ENCODE measurements at regions of chr4 and their contacts with region 1.

Region 1: GRCh38 chr4:16026160-16026761 is 57.6 kb downstream of the PROM1 start:
- DNase-seq: no peak
- ATAC-seq: peak in 1 of 2 donors; percentile 59
- H3K4me3 ChIP-seq: no peak overlapping the region
- H3K27ac ChIP-seq: no peak overlapping the region
- H3K4me1 ChIP-seq: peaks cover 6% of the 10 kb centered on the region
- H3K27me3 ChIP-seq: no peaks in the 10 kb centered on the region
- CTCF ChIP-seq: peak; percentile 87

Region 2: GRCh38 chr4:16264798-16265197 is 238.5 kb after region 1 on chr4:
- intact Hi-C with region 1: loop called (anchors 5 kb)
- DNase-seq: no peak
- ATAC-seq: peak in 1 of 2 donors; percentile 78
- H3K4me3 ChIP-seq: no peak overlapping the region
- H3K27ac ChIP-seq: no peak overlapping the region
- H3K4me1 ChIP-seq: peaks cover 9% of the 10 kb centered on the region
- H3K27me3 ChIP-seq: no peaks in the 10 kb centered on the region
- CTCF ChIP-seq: peak; percentile 69

Measured in lower lobe of right lung (tissue), 2 donors.